PC-9 (cell line): ENCODE measurements at regions of chr15 and their contacts with region 1.

Region 1: GRCh38 chr15:58415636-58416035 is 16.2 kb upstream of the LIPC start:
- DNase-seq: no peak
- H3K4me3 ChIP-seq: no peak overlapping the region
- H3K27ac ChIP-seq: no peak overlapping the region
- H3K4me1 ChIP-seq: no peaks in the 10 kb centered on the region
- H3K27me3 ChIP-seq: no peaks in the 10 kb centered on the region
- CTCF ChIP-seq: no peak

Region 2: GRCh38 chr15:58274885-58275284 is 140.8 kb before region 1 on chr15:
- CTCF ChIA-PET with region 1: no interaction called
- POLR2A ChIA-PET with region 1: interaction called, 10 read pairs
- intact Hi-C with region 1: no loop called
- DNase-seq: no peak
- H3K4me3 ChIP-seq: no peak overlapping the region
- H3K27ac ChIP-seq: no peak overlapping the region
- H3K4me1 ChIP-seq: peaks cover 8% of the 10 kb centered on the region
- H3K27me3 ChIP-seq: no peaks in the 10 kb centered on the region
- CTCF ChIP-seq: no peak

Region 3: GRCh38 chr15:58608129-58608590 is 192.5 kb after region 1 on chr15:
- CTCF ChIA-PET with region 1: no interaction called
- POLR2A ChIA-PET with region 1: no interaction called
- intact Hi-C with region 1: no loop called
- DNase-seq: no peak
- H3K4me3 ChIP-seq: no peak overlapping the region
- H3K27ac ChIP-seq: no peak overlapping the region
- H3K4me1 ChIP-seq: peaks cover 44% of the 10 kb centered on the region
- H3K27me3 ChIP-seq: no peaks in the 10 kb centered on the region
- CTCF ChIP-seq: no peak

Region 4: GRCh38 chr15:58682234-58682633 is 266.6 kb after region 1 on chr15:
- CTCF ChIA-PET with region 1: no interaction called
- POLR2A ChIA-PET with region 1: interaction called, 10 read pairs
- intact Hi-C with region 1: no loop called
- DNase-seq: no peak
- H3K4me3 ChIP-seq: no peak overlapping the region
- H3K27ac ChIP-seq: no peak overlapping the region
- H3K4me1 ChIP-seq: no peaks in the 10 kb centered on the region
- H3K27me3 ChIP-seq: no peaks in the 10 kb centered on the region
- CTCF ChIP-seq: no peak